Prostate gland (tissue), 2 donors: ENCODE measurements at regions of chr17 and their contacts with region 1.

Region 1: GRCh38 chr17:18038861-18039534 is at the starts of genes ATPAF2 and GID4:
- DNase-seq: peak; percentile 99
- H3K4me3 ChIP-seq: peak within 1 kb of the TSS; percentile 83 to 90
- H3K27ac ChIP-seq: peak within 1 kb of the TSS; percentile 82
- H3K4me1 ChIP-seq: peaks cover 10% of the 10 kb centered on the region
- H3K27me3 ChIP-seq: no peaks in the 10 kb centered on the region
- CTCF ChIP-seq: peak in 2 of 4 experiments; percentile 22 to 24
- POLR2A ChIP-seq: peak; percentile 45
- total RNA-seq, gene ATPAF2: 17.7 to 30.5 TPM
- total RNA-seq, gene GID4: 11.0 to 19.1 TPM

Region 2: DNA sequence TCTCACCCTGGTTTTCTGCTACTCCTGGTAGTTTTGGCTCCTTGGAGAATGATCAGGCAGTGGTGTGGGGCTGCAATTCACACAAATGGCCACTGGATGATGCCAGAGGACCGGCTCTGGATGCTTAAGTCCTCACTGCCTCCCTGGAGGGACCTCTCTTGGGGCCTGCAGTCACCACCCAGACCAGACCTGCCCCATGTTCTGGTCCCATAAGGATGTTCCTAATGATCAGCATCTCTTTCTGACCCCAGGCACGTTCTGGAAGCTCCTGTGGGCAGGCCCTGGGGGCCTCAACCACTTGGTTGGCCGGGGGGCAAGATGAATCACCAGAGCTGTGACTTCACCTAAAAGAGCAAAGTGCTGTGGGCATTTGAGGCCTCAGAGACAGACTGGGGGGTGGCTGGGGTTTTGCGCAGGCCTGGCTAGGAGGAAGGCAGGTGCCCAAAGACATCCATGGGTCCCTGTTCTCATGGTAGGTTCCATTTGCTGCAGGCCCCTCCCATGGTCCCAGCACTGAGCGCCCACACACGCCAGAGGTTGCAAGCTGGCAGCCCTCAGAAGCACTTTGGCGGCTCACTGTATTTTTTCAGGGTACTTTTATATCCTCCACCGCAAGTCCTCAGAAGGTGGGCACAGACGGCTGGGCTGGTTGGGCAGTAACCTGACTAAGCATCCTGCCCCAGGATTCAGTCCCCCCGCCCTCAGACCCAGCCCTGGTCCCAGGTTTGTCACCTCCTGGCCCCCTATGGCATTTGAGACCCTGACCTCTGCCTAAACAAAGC is 682.7 kb before region 1 on chr17:
- intact Hi-C with region 1: loop called (anchors 10 kb)
- DNase-seq: peak; percentile 76
- H3K4me3 ChIP-seq: no peak overlapping the region
- H3K27ac ChIP-seq: no peak overlapping the region
- H3K4me1 ChIP-seq: no peaks in the 10 kb centered on the region
- H3K27me3 ChIP-seq: no peaks in the 10 kb centered on the region
- CTCF ChIP-seq: peak; percentile 94 to 100 (median 98)
- POLR2A ChIP-seq: no peak

Region 3: GRCh38 chr17:17648762-17649161 is 390.2 kb before region 1 on chr17:
- intact Hi-C with region 1: no loop called
- DNase-seq: no peak
- H3K4me3 ChIP-seq: no peak overlapping the region
- H3K27ac ChIP-seq: no peak overlapping the region
- H3K4me1 ChIP-seq: no peaks in the 10 kb centered on the region
- H3K27me3 ChIP-seq: no peaks in the 10 kb centered on the region
- CTCF ChIP-seq: no peak
- POLR2A ChIP-seq: no peak

Region 4: GRCh38 chr17:17681187-17681848 is 357.7 kb before region 1 on chr17 and contains the start of gene RAI1:
- intact Hi-C with region 1: loop called (anchors 5 kb)
- DNase-seq: peak; percentile 78
- H3K4me3 ChIP-seq: peak within 1 kb of the TSS; percentile 77 to 82
- H3K27ac ChIP-seq: peak within 1 kb of the TSS; percentile 94 to 99
- H3K4me1 ChIP-seq: peaks cover 30% of the 10 kb centered on the region
- H3K27me3 ChIP-seq: no peaks in the 10 kb centered on the region
- CTCF ChIP-seq: peak; percentile 72 to 99 (median 92)
- POLR2A ChIP-seq: peak; percentile 46
- total RNA-seq, gene RAI1: 69.2 to 71.0 TPM

Region 5: DNA sequence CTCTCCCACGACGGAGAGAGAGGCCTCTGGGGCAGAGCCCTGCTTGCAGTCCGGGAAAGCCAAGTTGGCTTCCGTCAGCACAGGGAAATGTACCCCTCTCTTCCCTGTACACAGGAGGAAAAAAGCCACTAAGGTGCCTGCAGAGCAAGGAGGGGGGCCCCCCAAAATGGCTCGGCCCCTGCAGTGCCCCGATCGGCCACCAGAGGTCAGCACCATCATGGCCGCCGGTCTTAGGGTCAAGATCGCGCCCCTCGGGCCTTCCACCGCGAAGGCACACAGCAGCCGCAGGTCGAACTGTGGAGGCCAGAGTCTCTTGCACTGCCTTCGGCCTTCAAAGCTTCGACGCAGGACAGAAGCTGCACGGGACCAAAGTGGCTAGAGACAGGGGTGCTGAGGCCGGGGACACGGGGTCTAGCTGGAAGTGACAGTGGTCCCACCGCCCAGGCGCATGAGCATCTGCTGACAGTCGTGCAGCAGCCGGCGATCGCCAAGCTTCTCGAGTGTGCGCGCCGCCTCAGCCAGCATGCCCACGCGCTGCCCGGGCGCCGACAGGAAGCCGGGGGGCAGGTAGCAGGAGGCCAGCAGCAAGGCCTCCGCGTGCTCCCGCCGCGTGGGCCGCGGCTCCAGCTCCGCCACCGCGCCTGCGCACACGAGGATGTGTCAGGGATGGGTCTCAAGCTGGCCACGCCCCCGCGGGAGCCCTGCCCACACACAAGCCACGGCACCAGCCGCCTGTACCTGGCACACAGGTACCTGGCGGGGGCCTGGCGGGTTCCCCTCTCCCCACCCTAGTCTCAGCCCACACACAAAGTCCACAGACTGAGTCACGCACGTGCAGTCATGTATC is 226.6 kb before region 1 on chr17:
- intact Hi-C with region 1: loop called (anchors 10 kb)
- DNase-seq: peak; percentile 62
- H3K4me3 ChIP-seq: no peak overlapping the region
- H3K27ac ChIP-seq: peak overlapping the region; percentile 80 to 94
- H3K4me1 ChIP-seq: peaks cover 25% of the 10 kb centered on the region
- H3K27me3 ChIP-seq: no peaks in the 10 kb centered on the region
- CTCF ChIP-seq: peak; percentile 98 to 99 (median 99)
- POLR2A ChIP-seq: no peak

Region 6: GRCh38 chr17:17972126-17972951 is 66.7 kb before region 1 on chr17 and contains the starts of genes DRC3 and TOM1L2:
- intact Hi-C with region 1: loop called (anchors 5 kb)
- DNase-seq: peak; percentile 100
- H3K4me3 ChIP-seq: peak within 1 kb of the TSS; percentile 93 to 95
- H3K27ac ChIP-seq: peak within 1 kb of the TSS; percentile 91 to 95
- H3K4me1 ChIP-seq: no peaks in the 10 kb centered on the region
- H3K27me3 ChIP-seq: no peaks in the 10 kb centered on the region
- CTCF ChIP-seq: peak; percentile 40 to 64 (median 50)
- POLR2A ChIP-seq: peak; percentile 98
- total RNA-seq, gene DRC3: 4.5 to 10.0 TPM
- total RNA-seq, gene TOM1L2: 162 to 185 TPM

Region 7: DNA sequence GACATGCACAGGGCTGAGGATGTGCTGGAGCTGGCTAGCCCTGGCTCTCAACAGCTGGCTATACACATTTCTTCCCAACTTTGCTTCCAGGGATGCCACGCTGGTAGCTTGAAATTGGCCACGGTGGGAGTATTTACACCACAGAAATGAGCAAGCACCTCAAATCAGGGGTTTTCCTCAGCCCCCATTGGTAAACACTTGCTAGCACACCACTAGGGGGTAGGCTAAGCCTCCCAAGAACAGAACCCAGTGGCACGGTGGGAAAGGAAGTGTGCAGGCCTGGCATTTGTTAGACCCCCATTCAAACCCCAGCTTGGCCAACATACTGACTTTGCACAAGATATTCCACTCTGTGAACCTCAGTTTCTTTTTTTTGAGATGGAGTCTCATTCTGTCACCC is 53.4 kb before region 1 on chr17:
- intact Hi-C with region 1: no loop called
- DNase-seq: no peak
- H3K4me3 ChIP-seq: no peak overlapping the region
- H3K27ac ChIP-seq: no peak overlapping the region
- H3K4me1 ChIP-seq: peaks cover 4% of the 10 kb centered on the region
- H3K27me3 ChIP-seq: no peaks in the 10 kb centered on the region
- CTCF ChIP-seq: no peak
- POLR2A ChIP-seq: no peak

Region 8: DNA sequence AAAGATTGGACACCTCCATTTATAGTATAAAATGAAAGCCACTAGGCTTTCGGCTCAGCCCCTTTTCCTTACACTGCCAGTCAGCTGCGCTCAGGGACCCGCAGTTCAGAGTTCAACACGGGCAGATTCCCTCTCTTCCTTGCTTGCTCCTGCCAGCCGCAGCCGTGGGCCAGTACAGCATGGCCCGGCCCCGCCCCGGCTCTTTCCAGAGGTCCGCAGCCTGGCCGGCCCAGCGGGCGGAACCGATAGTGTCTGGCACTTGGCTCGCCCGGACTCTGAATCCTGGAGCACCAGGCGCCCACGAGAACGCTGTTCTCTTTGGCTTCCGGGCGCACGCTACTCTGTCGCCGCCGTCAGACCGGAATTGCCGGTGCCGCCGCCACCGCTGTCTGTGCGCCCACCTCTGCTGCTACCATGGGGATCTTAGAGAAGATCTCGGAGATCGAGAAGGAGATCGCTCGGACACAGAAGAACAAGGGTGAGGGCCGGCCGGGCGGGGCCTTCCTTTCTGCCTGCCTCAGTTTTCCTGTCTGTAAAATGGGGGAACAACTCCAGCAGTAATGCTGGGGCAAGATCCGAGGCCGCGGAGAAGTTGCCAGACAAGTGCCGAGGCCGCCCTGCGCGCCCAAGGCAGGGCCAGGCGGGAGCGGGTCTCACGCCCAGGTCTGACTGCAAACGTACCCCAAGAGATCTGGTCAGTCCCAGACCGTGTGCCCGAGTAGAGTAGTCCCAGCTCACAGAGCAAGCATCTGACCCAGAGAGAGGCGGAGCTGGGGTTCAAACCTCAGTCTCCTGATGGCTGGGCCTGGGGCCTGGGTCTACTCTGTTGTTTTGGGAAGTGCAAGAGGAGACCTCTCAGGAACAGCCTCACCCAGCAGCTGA is 48.9 kb after region 1 on chr17 and contains the start of gene DRG2:
- intact Hi-C with region 1: loop called (anchors 2 kb)
- DNase-seq: peak; percentile 83
- H3K4me3 ChIP-seq: peak within 1 kb of the TSS; percentile 71 to 85
- H3K27ac ChIP-seq: peak within 1 kb of the TSS; percentile 72 to 78
- H3K4me1 ChIP-seq: no peaks in the 10 kb centered on the region
- H3K27me3 ChIP-seq: no peaks in the 10 kb centered on the region
- CTCF ChIP-seq: peak in 2 of 4 experiments; percentile 37 to 44
- POLR2A ChIP-seq: no peak
- total RNA-seq, gene DRG2: 44.1 to 56.9 TPM

Region 9: GRCh38 chr17:18225121-18225566 is 186.1 kb after region 1 on chr17:
- intact Hi-C with region 1: no loop called
- DNase-seq: peak; percentile 95
- H3K4me3 ChIP-seq: peak overlapping the region; percentile 16 to 27
- H3K27ac ChIP-seq: peak overlapping the region in 1 of 2 donors; percentile 13
- H3K4me1 ChIP-seq: no peaks in the 10 kb centered on the region
- H3K27me3 ChIP-seq: no peaks in the 10 kb centered on the region
- CTCF ChIP-seq: peak in 1 of 4 experiments; percentile 15
- POLR2A ChIP-seq: no peak